ENCODE measurements at regions of chr5 and their contacts with region 1.

Region 1: GRCh38 chr5:69450116-69450515 is 35.2 kb downstream of the MARVELD2 start:
- DNase-seq: no peak
- ATAC-seq: no peak
- H3K4me3 ChIP-seq: no peak overlapping the region
- H3K27ac ChIP-seq: no peak overlapping the region
- H3K4me1 ChIP-seq: no peaks in the 10 kb centered on the region
- H3K27me3 ChIP-seq: no peaks in the 10 kb centered on the region
- CTCF ChIP-seq: no peak
- POLR2A ChIP-seq: no peak

Region 2: DNA sequence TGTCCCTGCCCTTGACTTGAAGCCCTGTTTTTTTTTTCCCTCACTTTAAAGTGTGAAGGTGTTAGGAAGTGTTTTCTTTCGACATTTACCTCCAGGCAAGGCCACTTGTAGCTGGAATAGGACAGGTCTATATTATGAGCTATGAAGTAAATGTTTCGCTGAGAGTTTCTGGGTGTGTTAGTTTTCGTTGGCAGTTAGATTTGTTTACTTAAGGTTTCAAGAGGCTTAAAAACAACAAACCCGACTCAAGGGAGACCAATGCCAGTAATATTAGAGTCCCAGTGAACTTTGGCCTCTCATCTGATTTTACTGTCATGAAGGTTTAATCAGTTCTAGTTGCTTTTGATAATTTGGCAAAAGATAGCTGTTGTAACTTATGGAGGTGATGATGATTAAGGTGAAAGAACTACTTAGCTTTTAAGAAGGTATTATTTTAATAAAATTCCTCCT is 67.7 kb after region 1 on chr5:
- intact Hi-C with region 1: loop called in 1 of 10 experiments (anchors 10 kb)
- DNase-seq: no peak
- ATAC-seq: no peak
- H3K4me3 ChIP-seq: no peak overlapping the region
- H3K27ac ChIP-seq: no peak overlapping the region
- H3K4me1 ChIP-seq: no peaks in the 10 kb centered on the region
- H3K27me3 ChIP-seq: no peaks in the 10 kb centered on the region
- CTCF ChIP-seq: no peak
- POLR2A ChIP-seq: no peak